Esophagus muscularis mucosa (tissue), 4 donors: ENCODE measurements at regions of chr6 and their contacts with region 1.

Region 1: DNA sequence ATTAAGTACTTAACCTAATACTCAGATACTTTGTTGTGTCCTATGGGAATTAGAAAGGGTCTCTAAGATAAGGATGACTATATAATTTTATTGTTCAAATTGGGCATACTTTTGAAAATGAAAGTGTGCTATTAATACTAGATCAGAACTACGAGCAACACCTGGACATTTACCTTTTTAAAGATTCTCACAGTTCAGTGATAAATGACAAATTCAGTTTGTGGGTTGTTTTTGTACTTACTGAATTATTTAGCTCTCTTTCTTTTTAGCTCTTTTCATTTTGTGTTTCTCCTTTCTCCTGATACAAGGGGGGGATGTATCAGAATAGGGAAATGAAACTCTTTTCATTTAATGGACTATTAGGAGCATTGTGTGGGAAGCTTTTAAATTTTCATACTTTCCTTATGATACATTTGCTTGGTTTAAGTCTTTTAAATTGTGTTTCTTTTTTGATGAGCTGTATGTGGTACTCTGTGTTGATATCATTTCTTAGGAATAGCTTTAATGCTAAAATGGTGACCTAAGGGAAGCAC is 47.5 kb downstream of the PHF3 start:
- DNase-seq: no peak
- H3K4me3 ChIP-seq: no peak overlapping the region
- H3K27ac ChIP-seq: no peak overlapping the region
- H3K4me1 ChIP-seq: peaks cover 4 to 19% (median 14%) of the 10 kb centered on the region in 4 donors
- H3K27me3 ChIP-seq: no peaks in the 10 kb centered on the region
- CTCF ChIP-seq: no peak
- EP300 ChIP-seq: no peak
- POLR2A ChIP-seq: no peak

Region 2: GRCh38 chr6:63644668-63645326 is 38.3 kb before region 1 on chr6:
- intact Hi-C with region 1: loop called (anchors 5 kb)
- DNase-seq: no peak
- H3K4me3 ChIP-seq: no peak overlapping the region
- H3K27ac ChIP-seq: no peak overlapping the region
- H3K4me1 ChIP-seq: peaks cover 48 to 84% (median 68%) of the 10 kb centered on the region in 4 donors
- H3K27me3 ChIP-seq: no peaks in the 10 kb centered on the region
- CTCF ChIP-seq: no peak
- EP300 ChIP-seq: no peak
- POLR2A ChIP-seq: no peak

Region 3: DNA sequence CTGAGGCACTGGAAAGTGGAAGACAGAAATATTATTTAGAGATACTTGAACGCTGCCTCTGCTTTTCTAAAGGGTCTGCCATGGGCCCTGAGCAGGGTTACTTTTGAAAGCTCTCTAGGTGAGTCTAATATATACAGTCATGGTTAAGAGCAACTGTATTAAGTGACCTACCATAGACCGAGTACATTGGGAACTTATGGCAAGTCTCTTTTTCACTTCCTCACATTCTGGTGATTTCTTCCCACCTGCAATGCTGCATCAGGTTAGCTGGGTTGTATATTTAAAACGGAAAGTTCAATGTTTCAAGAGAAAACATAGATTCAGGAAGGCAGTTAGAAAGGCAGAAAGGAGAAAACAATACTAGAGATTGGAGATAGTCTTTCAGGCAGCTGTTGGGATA is 107.2 kb after region 1 on chr6:
- intact Hi-C with region 1: no loop called
- DNase-seq: no peak
- H3K4me3 ChIP-seq: no peak overlapping the region
- H3K27ac ChIP-seq: no peak overlapping the region
- H3K4me1 ChIP-seq: no peaks in the 10 kb centered on the region
- H3K27me3 ChIP-seq: peaks cover 0 to 9% (median 0%) of the 10 kb centered on the region in 4 donors
- CTCF ChIP-seq: no peak
- EP300 ChIP-seq: no peak
- POLR2A ChIP-seq: no peak